Activated CD4-positive, alpha-beta T cell treated with anti-CD3 and anti-CD28 coated beads, Interleukin-2, amount 10 ng/mL, durations not matched to agents 24 days and 14 days (primary cell): ENCODE measurements at regions of chr2 and their contacts with region 1.

Region 1: DNA sequence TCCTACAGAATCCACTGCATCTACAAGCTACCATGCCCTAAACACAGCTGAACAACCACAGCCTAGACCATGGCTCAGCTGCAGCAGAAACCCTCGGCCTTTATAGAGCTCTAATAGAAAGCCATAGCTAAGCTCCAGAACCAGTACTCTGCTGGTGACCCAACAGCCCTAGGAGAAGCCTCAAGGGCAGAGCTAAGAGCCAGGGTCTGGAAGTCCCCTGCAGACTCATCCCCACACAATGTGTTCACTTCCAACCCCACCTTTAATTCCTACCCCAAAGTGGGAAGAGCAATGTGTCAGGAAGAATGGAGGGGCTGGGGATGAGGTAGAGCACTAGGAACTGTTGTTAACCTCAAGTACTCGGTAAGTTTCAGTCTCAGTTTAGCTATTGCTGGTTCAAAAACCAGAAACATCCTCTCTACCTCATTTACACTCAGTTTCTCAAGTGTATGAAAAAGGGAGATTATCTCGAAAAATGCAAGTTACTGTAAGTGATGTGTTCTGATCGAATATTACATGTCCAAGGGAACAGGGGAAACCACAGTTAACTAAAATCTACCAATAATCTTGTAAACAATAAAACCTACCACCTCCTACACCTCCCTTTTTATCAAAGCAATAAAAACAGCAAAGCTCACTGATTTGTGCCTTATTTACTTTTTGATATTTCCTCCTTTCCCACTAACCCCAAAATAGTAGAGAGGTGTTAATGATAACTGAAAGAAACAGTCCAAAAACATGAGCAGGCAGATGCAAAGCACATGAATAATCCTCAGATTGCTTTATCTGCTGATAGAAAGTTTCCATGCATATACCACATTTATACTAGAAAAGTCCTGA is 36.2 kb downstream of the THADA start:
- DNase-seq: peak; percentile 68
- H3K4me3 Mint-ChIP-seq: peak overlapping the region; percentile 62
- H3K27ac Mint-ChIP-seq: peak overlapping the region; percentile 96
- H3K4me1 Mint-ChIP-seq: peaks cover 52% of the 10 kb centered on the region
- H3K27me3 Mint-ChIP-seq: no peaks in the 10 kb centered on the region

Region 2: DNA sequence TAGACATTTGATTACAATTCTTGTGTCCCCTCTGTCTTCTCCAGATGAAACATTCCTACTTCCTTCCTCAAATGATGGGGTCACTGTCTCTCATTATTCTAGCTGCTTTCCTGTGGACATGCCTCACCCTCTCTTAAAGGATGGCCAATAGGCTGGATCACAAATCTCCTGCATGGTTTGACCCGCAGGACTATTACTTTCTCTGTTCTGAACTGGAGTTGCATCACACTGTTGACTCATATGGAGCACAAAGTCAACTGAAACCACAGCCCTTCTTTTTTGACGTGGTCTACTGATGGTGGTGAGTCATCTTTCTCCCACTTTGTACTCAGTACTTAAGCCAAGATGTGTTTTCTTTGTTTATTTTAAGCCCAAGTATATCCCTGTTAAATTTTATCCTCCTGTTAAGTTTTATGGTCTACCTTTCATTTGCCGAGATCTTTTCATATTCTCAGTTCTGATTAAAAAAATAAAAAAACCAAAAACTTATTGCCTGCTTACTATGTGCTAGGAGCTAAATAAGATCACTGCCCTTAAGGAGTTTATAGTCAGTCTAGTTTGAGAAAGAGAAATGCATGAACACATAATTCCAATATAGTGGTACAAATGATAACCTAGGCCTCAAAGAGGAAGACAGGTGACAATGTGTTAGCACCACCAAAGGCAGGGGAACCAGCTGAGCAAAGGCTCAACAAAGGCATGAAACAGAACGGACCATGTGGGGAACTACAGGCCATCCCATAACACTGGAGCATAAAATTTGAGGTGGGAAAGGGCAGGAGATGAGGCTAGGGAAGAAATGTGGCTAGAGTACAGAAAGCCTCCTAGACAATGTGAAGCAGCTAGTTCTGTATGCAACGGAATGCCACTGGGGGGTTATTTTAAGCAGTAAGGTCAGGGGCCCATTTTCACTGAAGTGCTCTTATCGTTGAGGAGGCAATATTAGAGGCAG is 265.6 kb before region 1 on chr2:
- intact Hi-C with region 1: loop called (anchors 1 kb)
- DNase-seq: peak; percentile 88
- H3K4me3 Mint-ChIP-seq: peak overlapping the region; percentile 49
- H3K27ac Mint-ChIP-seq: peak overlapping the region; percentile 76
- H3K4me1 Mint-ChIP-seq: peaks cover 24% of the 10 kb centered on the region
- H3K27me3 Mint-ChIP-seq: no peaks in the 10 kb centered on the region

Region 3: DNA sequence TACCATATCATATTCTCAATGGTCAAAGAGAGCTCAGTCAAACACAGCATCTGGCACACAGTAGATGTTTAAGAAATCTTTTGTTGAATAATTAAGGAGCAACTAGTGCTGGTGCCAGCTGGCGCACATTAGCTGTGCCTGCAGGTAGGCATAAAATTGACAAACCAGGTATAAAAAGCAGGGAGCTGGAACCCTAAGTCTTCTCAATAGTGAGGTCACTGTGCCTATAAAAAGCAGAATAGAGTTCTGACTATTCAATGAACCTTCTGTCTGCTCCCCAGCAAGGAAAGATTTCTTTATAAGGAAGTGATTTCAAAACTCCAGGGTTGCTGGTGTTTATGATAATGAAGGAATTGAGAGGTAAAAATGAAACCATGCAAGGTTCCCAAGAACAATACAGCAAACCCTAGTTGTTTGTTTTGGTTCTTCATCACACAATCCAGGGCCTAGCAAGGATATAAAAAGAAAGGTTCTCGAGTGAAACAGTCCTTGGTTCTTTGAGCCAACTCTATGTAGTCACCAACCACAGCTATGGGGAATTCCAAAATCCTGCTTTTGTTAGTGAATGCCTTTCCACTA is 39.9 kb before region 1 on chr2:
- intact Hi-C with region 1: loop called (anchors 5 kb)
- DNase-seq: no peak
- H3K4me3 Mint-ChIP-seq: no peak overlapping the region
- H3K27ac Mint-ChIP-seq: peak overlapping the region; percentile 45
- H3K4me1 Mint-ChIP-seq: peaks cover 14% of the 10 kb centered on the region
- H3K27me3 Mint-ChIP-seq: no peaks in the 10 kb centered on the region

Region 4: GRCh38 chr2:43569921-43570320 is 10.3 kb after region 1 on chr2:
- intact Hi-C with region 1: loop called (anchors 1 kb)
- DNase-seq: peak; percentile 70
- H3K4me3 Mint-ChIP-seq: peak overlapping the region; percentile 63
- H3K27ac Mint-ChIP-seq: peak overlapping the region; percentile 92
- H3K4me1 Mint-ChIP-seq: peaks cover 27% of the 10 kb centered on the region
- H3K27me3 Mint-ChIP-seq: no peaks in the 10 kb centered on the region